Endothelial cell of umbilical vein (primary cell): ENCODE measurements at regions of chr22 and their contacts with region 1.

Region 1: GRCh38 chr22:39319270-39320022 is at the start of gene RPL3:
- DNase-seq: peak; percentile 99
- H3K4me3 ChIP-seq: peak within 1 kb of the TSS; percentile 87 to 98 (median 96)
- H3K27ac ChIP-seq: peak within 1 kb of the TSS; percentile 96
- H3K4me1 ChIP-seq: peaks cover 30% of the 10 kb centered on the region
- H3K27me3 ChIP-seq: no peaks in the 10 kb centered on the region
- CTCF ChIP-seq: peak in 1 of 2 donors; percentile 5
- POLR2A ChIP-seq: peak; percentile 100
- total RNA-seq, gene RPL3: 1,954 and 2,068 TPM in 2 replicates

Region 2: DNA sequence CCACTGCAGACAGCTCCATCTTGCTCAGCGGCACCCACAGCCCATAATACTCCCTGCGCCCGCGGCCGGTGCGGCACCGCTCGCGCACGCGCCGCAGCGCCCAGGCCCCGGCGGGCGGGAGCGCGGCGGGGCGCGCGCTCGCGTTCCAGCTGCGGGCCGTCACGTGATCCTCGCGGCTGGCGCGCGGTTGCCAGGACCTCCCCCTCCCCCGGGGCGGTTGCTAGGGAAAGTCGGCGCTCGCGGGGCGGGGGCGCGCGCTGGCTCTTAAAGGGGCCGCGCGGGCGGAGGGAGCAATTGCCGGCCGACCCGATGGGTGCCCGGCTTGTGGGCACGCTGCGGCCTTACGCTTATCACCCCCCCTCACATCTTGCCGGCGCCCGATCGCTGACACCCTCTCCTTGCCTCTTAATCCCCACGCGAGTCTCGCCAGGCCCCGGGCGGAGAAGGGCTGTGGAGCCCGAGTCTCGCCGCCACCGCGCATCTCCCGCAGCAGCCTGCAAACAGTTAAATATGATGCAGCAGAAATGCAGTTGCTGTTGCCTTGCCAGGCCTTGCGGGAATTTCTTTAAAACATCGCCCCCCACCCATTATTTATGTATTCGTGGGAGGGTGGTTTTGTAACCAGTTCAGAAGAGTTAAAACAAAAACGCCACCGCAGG is 447.1 kb before region 1 on chr22 and contains the start of gene CBX6:
- CTCF ChIA-PET with region 1: interaction called, 5 read pairs
- POLR2A ChIA-PET with region 1: no interaction called
- dilution Hi-C with region 1: no loop called
- intact Hi-C with region 1: loop called (anchors 2 kb)
- DNase-seq: peak; percentile 92
- H3K4me3 ChIP-seq: peak within 1 kb of the TSS; percentile 76 to 82 (median 79)
- H3K27ac ChIP-seq: peak within 1 kb of the TSS; percentile 21
- H3K4me1 ChIP-seq: peaks cover 17% of the 10 kb centered on the region
- H3K27me3 ChIP-seq: peaks cover 14 to 25% of the 10 kb centered on the region in 2 experiments
- CTCF ChIP-seq: no peak
- POLR2A ChIP-seq: peak; percentile 80
- total RNA-seq, gene CBX6: 60.9 and 62.6 TPM in 2 replicates

Region 3: DNA sequence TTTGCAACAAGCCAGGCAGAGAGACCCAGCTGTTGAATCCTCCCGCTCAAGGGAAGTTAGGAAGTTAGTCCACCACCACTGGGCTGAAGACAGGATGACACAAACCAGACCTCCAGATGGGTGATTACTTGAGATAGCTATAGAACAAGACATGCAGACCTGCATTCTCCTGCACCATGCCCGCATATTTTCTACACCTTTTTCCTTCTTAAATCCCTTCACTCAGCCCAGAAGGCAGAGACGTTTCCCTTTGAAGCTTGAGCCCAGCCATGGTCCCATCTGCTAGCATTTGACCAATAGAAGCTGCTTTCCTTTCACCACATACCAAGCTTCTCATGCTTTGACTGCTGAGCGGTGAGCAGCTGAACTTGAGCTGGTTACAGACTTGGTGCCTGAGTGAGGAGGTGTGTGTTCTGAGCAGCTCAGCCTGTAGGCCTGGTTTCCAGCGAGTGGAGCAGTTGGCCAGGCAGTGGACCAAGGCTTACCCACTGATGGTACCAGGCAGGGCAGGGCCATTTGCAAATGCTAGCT is 418.3 kb before region 1 on chr22:
- CTCF ChIA-PET with region 1: no interaction called
- POLR2A ChIA-PET with region 1: no interaction called
- dilution Hi-C with region 1: no loop called
- intact Hi-C with region 1: no loop called
- DNase-seq: no peak
- H3K4me3 ChIP-seq: no peak overlapping the region
- H3K27ac ChIP-seq: no peak overlapping the region
- H3K4me1 ChIP-seq: no peaks in the 10 kb centered on the region
- H3K27me3 ChIP-seq: peaks cover 10 to 23% of the 10 kb centered on the region in 2 experiments
- CTCF ChIP-seq: no peak
- POLR2A ChIP-seq: no peak

Region 4: GRCh38 chr22:39152511-39153219 is 166.8 kb before region 1 on chr22 and contains the start of gene CBX7:
- CTCF ChIA-PET with region 1: interaction called, 4 read pairs
- POLR2A ChIA-PET with region 1: interaction called, 14 read pairs
- dilution Hi-C with region 1: no loop called
- intact Hi-C with region 1: no loop called
- DNase-seq: peak; percentile 79
- H3K4me3 ChIP-seq: peak within 1 kb of the TSS in 2 of 3 experiments; percentile 62 to 67
- H3K27ac ChIP-seq: no peak within 1 kb of the TSS
- H3K4me1 ChIP-seq: no peaks in the 10 kb centered on the region
- H3K27me3 ChIP-seq: peaks cover 24 to 29% of the 10 kb centered on the region in 2 experiments
- CTCF ChIP-seq: no peak
- POLR2A ChIP-seq: no peak
- total RNA-seq, gene CBX7: 5.1 and 7.1 TPM in 2 replicates

Region 5: GRCh38 chr22:39230261-39231196 is 88.9 kb before region 1 on chr22:
- CTCF ChIA-PET with region 1: interaction called, 34 read pairs
- POLR2A ChIA-PET with region 1: interaction called, 3 read pairs
- dilution Hi-C with region 1: no loop called
- intact Hi-C with region 1: no loop called
- DNase-seq: no peak
- H3K4me3 ChIP-seq: no peak overlapping the region
- H3K27ac ChIP-seq: peak overlapping the region; percentile 51
- H3K4me1 ChIP-seq: peaks cover 47% of the 10 kb centered on the region
- H3K27me3 ChIP-seq: no peaks in the 10 kb centered on the region
- CTCF ChIP-seq: peak in 1 of 2 donors; percentile 32
- POLR2A ChIP-seq: no peak

Region 6: GRCh38 chr22:39283322-39284004 is 36.0 kb before region 1 on chr22:
- CTCF ChIA-PET with region 1: interaction called, 14 read pairs
- POLR2A ChIA-PET with region 1: interaction called, 6 read pairs
- dilution Hi-C with region 1: no loop called
- intact Hi-C with region 1: loop called (anchors 1 kb)
- DNase-seq: peak; percentile 91
- H3K4me3 ChIP-seq: no peak overlapping the region
- H3K27ac ChIP-seq: peak overlapping the region; percentile 93
- H3K4me1 ChIP-seq: peaks cover 43% of the 10 kb centered on the region
- H3K27me3 ChIP-seq: no peaks in the 10 kb centered on the region
- CTCF ChIP-seq: no peak
- POLR2A ChIP-seq: peak; percentile 53

Region 7: DNA sequence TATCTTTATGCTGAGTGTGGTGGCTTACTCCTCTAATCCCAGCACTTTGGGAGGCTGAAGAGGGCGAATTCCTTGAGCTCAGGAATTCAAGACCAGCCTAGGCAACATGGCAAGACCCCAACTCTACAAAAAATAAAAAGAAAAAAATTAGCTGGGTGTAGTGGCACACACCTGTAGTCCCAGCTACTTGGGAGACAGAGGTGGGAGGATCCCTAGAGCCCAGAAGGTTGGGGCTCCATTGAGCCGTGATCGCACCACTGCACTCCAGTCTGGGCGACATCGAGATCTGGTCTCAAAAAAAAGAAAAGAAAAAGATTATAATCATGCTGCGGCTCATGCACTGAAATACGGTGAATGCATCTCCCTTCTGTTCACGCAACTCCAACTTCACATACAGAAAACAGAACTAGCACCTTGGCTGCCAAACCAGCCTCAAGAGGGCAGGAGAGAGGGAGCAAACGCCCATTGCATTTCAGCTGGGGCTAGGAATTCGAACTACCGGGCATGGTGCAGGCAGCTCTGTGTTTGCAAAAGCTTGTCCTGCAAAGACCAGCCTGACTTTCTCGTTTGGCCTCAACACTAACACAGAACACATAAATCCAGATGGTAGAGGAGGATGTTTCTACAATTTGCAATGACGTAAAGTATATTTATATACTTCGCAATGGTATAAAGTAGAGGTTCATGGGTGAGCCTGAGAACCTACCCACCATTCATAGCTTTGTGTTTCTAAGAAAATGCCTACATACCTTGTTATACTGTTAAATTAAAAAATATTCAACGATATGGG is 24.0 kb after region 1 on chr22:
- CTCF ChIA-PET with region 1: interaction called, 35 read pairs
- POLR2A ChIA-PET with region 1: interaction called, 7 read pairs
- dilution Hi-C with region 1: no loop called
- intact Hi-C with region 1: loop called (anchors 2 kb)
- DNase-seq: peak; percentile 53
- H3K4me3 ChIP-seq: no peak overlapping the region
- H3K27ac ChIP-seq: no peak overlapping the region
- H3K4me1 ChIP-seq: peaks cover 2% of the 10 kb centered on the region
- H3K27me3 ChIP-seq: peaks cover 5 to 10% of the 10 kb centered on the region in 2 experiments
- CTCF ChIP-seq: peak; percentile 70 to 83
- POLR2A ChIP-seq: no peak

Region 8: GRCh38 chr22:39508393-39508792 is 188.9 kb after region 1 on chr22:
- CTCF ChIA-PET with region 1: no interaction called
- POLR2A ChIA-PET with region 1: no interaction called
- dilution Hi-C with region 1: no loop called
- intact Hi-C with region 1: no loop called
- DNase-seq: no peak
- H3K4me3 ChIP-seq: no peak overlapping the region
- H3K27ac ChIP-seq: no peak overlapping the region
- H3K4me1 ChIP-seq: peaks cover 4% of the 10 kb centered on the region
- H3K27me3 ChIP-seq: no peaks in the 10 kb centered on the region
- CTCF ChIP-seq: no peak
- POLR2A ChIP-seq: no peak